ENCODE measurements at regions of chr21 and their contacts with region 1.

Region 1: GRCh38 chr21:28745131-28746016 is 247.3 kb downstream of the LTN1 start:
- DNase-seq: peak; percentile 42 to 86 (median 68)
- ATAC-seq: peak; percentile 86
- H3K4me3 ChIP-seq: peak overlapping the region; percentile 49 to 50
- H3K4me3 Mint-ChIP-seq: no peak overlapping the region
- H3K27ac ChIP-seq: no peak overlapping the region
- H3K27ac Mint-ChIP-seq: no peak overlapping the region
- H3K4me1 ChIP-seq: no peaks in the 10 kb centered on the region
- H3K4me1 Mint-ChIP-seq: no peaks in the 10 kb centered on the region
- H3K27me3 ChIP-seq: no peaks in the 10 kb centered on the region
- H3K27me3 Mint-ChIP-seq: no peaks in the 10 kb centered on the region
- CTCF ChIP-seq: peak; percentile 73

Region 2: DNA sequence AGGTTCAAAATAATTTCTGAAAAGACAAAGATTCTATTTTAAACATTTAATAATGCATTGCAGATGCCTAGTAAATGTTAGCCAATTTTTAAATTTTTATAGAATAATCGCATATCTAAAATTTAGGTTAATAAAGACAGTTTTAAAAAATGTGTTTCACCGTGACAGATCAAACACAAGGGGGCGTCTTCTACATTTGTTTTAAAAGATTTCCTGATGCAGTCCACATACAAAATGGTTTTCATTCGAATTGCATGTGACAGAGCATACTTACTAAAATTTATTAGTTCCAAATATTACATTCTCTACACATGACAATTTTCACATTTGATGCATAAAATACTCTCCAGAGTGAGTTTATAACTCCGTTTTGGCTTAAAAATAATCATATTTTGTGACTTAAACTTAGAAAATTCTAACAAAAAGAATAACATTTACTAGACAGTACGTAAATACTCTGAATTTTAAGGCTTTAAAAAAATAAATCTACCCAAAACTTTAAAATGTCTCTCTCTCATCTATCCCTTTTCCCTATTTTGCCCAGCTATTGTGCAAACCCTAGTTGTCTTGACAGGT is 1975.7 kb before region 1 on chr21:
- CTCF ChIA-PET with region 1: interaction called, 3 read pairs
- POLR2A ChIA-PET with region 1: no interaction called
- intact Hi-C with region 1: loop called in 1 of 2 experiments (anchors 5 kb)
- DNase-seq: peak in 2 of 9 experiments; percentile 5 to 17
- ATAC-seq: no peak
- H3K4me3 ChIP-seq: no peak overlapping the region
- H3K4me3 Mint-ChIP-seq: no peak overlapping the region
- H3K27ac ChIP-seq: no peak overlapping the region
- H3K27ac Mint-ChIP-seq: no peak overlapping the region
- H3K4me1 ChIP-seq: no peaks in the 10 kb centered on the region
- H3K4me1 Mint-ChIP-seq: no peaks in the 10 kb centered on the region
- H3K27me3 ChIP-seq: no peaks in the 10 kb centered on the region
- H3K27me3 Mint-ChIP-seq: no peaks in the 10 kb centered on the region
- CTCF ChIP-seq: no peak

Region 3: GRCh38 chr21:26850108-26850643 is 1895.2 kb before region 1 on chr21:
- CTCF ChIA-PET with region 1: interaction called, 10 read pairs
- POLR2A ChIA-PET with region 1: no interaction called
- intact Hi-C with region 1: loop called in 1 of 2 experiments (anchors 2 kb)
- DNase-seq: peak in 2 of 9 experiments; percentile 25 to 38
- ATAC-seq: no peak
- H3K4me3 ChIP-seq: no peak overlapping the region
- H3K4me3 Mint-ChIP-seq: no peak overlapping the region
- H3K27ac ChIP-seq: no peak overlapping the region
- H3K27ac Mint-ChIP-seq: no peak overlapping the region
- H3K4me1 ChIP-seq: peaks cover 17% of the 10 kb centered on the region
- H3K4me1 Mint-ChIP-seq: peaks cover 19% of the 10 kb centered on the region
- H3K27me3 ChIP-seq: peaks cover 3 to 4% of the 10 kb centered on the region in 2 experiments
- H3K27me3 Mint-ChIP-seq: peaks cover 45% of the 10 kb centered on the region
- CTCF ChIP-seq: no peak

Region 4: GRCh38 chr21:28235169-28235895 is 510.0 kb before region 1 on chr21:
- CTCF ChIA-PET with region 1: no interaction called
- POLR2A ChIA-PET with region 1: no interaction called
- intact Hi-C with region 1: no loop called
- DNase-seq: peak in 1 of 9 experiments; percentile 5
- ATAC-seq: no peak
- H3K4me3 ChIP-seq: no peak overlapping the region
- H3K4me3 Mint-ChIP-seq: no peak overlapping the region
- H3K27ac ChIP-seq: no peak overlapping the region
- H3K27ac Mint-ChIP-seq: no peak overlapping the region
- H3K4me1 ChIP-seq: no peaks in the 10 kb centered on the region
- H3K4me1 Mint-ChIP-seq: no peaks in the 10 kb centered on the region
- H3K27me3 ChIP-seq: no peaks in the 10 kb centered on the region
- H3K27me3 Mint-ChIP-seq: no peaks in the 10 kb centered on the region
- CTCF ChIP-seq: no peak

Region 5: GRCh38 chr21:28516991-28517592 is 228.3 kb before region 1 on chr21:
- CTCF ChIA-PET with region 1: interaction called, 92 read pairs
- POLR2A ChIA-PET with region 1: interaction called, 4 read pairs
- intact Hi-C with region 1: loop called (anchors 1 kb)
- DNase-seq: peak; percentile 26 to 73 (median 57)
- ATAC-seq: peak; percentile 91
- H3K4me3 ChIP-seq: no peak overlapping the region
- H3K4me3 Mint-ChIP-seq: no peak overlapping the region
- H3K27ac ChIP-seq: no peak overlapping the region
- H3K27ac Mint-ChIP-seq: no peak overlapping the region
- H3K4me1 ChIP-seq: no peaks in the 10 kb centered on the region
- H3K4me1 Mint-ChIP-seq: peaks cover 4% of the 10 kb centered on the region
- H3K27me3 ChIP-seq: no peaks in the 10 kb centered on the region
- H3K27me3 Mint-ChIP-seq: no peaks in the 10 kb centered on the region
- CTCF ChIP-seq: peak; percentile 63

Region 6: GRCh38 chr21:28522014-28522799 is 223.2 kb before region 1 on chr21:
- CTCF ChIA-PET with region 1: interaction called, 92 read pairs
- POLR2A ChIA-PET with region 1: interaction called, 4 read pairs
- intact Hi-C with region 1: loop called (anchors 1 kb)
- DNase-seq: peak in 2 of 9 experiments; percentile 21 to 22
- ATAC-seq: peak; percentile 23
- H3K4me3 ChIP-seq: no peak overlapping the region
- H3K4me3 Mint-ChIP-seq: no peak overlapping the region
- H3K27ac ChIP-seq: no peak overlapping the region
- H3K27ac Mint-ChIP-seq: no peak overlapping the region
- H3K4me1 ChIP-seq: no peaks in the 10 kb centered on the region
- H3K4me1 Mint-ChIP-seq: peaks cover 7% of the 10 kb centered on the region
- H3K27me3 ChIP-seq: no peaks in the 10 kb centered on the region
- H3K27me3 Mint-ChIP-seq: peaks cover 2% of the 10 kb centered on the region
- CTCF ChIP-seq: no peak

Region 7: GRCh38 chr21:28769683-28770082 is 24.3 kb after region 1 on chr21:
- CTCF ChIA-PET with region 1: interaction called, 10 read pairs
- POLR2A ChIA-PET with region 1: no interaction called
- intact Hi-C with region 1: no loop called
- DNase-seq: no peak
- ATAC-seq: no peak
- H3K4me3 ChIP-seq: no peak overlapping the region
- H3K4me3 Mint-ChIP-seq: no peak overlapping the region
- H3K27ac ChIP-seq: no peak overlapping the region
- H3K27ac Mint-ChIP-seq: no peak overlapping the region
- H3K4me1 ChIP-seq: no peaks in the 10 kb centered on the region
- H3K4me1 Mint-ChIP-seq: no peaks in the 10 kb centered on the region
- H3K27me3 ChIP-seq: no peaks in the 10 kb centered on the region
- H3K27me3 Mint-ChIP-seq: no peaks in the 10 kb centered on the region
- CTCF ChIP-seq: no peak

Region 8: GRCh38 chr21:28871388-28872010 is 126.1 kb after region 1 on chr21:
- CTCF ChIA-PET with region 1: no interaction called
- POLR2A ChIA-PET with region 1: no interaction called
- intact Hi-C with region 1: no loop called
- DNase-seq: no peak
- ATAC-seq: no peak
- H3K4me3 ChIP-seq: no peak overlapping the region
- H3K4me3 Mint-ChIP-seq: no peak overlapping the region
- H3K27ac ChIP-seq: no peak overlapping the region
- H3K27ac Mint-ChIP-seq: peak overlapping the region; percentile 15
- H3K4me1 ChIP-seq: no peaks in the 10 kb centered on the region
- H3K4me1 Mint-ChIP-seq: no peaks in the 10 kb centered on the region
- H3K27me3 ChIP-seq: no peaks in the 10 kb centered on the region
- H3K27me3 Mint-ChIP-seq: no peaks in the 10 kb centered on the region
- CTCF ChIP-seq: no peak

Region 9: GRCh38 chr21:28943631-28944030 is 198.3 kb after region 1 on chr21:
- CTCF ChIA-PET with region 1: interaction called, 20 read pairs
- POLR2A ChIA-PET with region 1: no interaction called
- intact Hi-C with region 1: loop called (anchors 1 to 5 kb)
- DNase-seq: no peak
- ATAC-seq: no peak
- H3K4me3 ChIP-seq: no peak overlapping the region
- H3K4me3 Mint-ChIP-seq: no peak overlapping the region
- H3K27ac ChIP-seq: no peak overlapping the region
- H3K27ac Mint-ChIP-seq: no peak overlapping the region
- H3K4me1 ChIP-seq: no peaks in the 10 kb centered on the region
- H3K4me1 Mint-ChIP-seq: peaks cover 2% of the 10 kb centered on the region
- H3K27me3 ChIP-seq: no peaks in the 10 kb centered on the region
- H3K27me3 Mint-ChIP-seq: no peaks in the 10 kb centered on the region
- CTCF ChIP-seq: no peak